Cardiac septum (tissue), 1 donor: ENCODE measurements at regions of chr1 and their contacts with region 1.

Region 1: DNA sequence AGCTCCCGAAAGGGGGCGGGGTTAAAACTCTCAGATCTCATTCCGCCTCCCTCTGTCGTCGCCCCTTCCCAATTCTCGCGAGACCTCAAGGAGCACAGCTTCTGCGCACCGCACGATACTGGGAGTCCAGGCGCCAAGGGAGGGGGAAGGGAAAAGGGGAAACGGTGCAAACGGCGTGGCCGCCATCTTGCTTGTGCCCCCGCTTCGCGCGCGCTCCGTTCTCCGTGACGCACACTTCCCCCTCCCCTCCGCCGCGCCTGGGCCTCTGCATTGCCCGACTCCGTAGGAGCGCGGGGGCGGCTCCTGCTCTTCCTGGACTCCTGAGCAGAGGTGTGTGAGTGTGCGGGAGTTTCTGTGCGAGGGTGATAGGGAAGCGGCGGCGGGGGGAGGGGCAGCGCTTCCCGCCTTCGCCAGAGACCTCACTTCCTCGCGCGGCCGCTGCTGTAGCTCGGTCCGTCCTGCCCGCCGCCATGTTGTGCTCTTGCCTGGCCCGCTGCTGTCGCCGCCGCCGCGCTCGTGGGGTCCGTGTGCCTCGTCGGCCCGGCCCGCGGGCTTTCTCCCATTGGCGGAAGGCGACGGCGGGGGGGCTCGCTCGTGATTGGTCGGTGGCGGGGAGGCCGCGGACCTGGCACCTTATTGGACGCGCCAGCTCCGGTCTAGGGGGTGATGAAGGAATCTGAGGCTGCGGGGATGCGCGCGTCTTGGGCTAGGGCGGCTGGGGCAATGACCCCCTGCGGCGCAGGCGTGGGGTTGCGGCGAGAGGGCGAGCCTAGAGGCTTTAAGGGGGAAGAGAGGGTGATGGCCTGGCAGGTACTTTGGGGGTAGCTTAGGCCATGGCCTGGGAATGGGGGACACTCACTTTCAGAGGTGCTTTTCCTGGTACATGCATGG is at the start of gene NFYC:
- DNase-seq: peak; percentile 98
- total RNA-seq, gene NFYC: 61.7 TPM

Region 2: DNA sequence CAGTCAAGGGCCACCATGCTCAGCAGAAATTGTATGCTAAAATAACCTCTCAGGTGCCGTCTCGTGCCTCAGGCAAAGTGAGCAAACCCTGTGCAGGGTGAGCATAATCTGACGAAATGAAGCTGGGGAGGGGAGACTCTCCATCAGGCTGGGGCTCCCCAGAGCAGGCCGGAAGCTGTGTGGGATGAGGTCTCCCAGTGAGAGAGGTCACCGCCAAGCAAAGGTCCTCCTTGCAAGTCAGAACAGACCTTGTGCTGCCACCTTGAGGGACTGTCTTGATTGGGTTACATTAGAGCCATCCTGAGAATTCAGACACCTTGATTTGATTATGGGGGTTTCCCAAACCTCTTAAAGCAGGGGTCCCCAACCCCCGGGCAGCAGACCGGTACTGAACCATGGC is 96.2 kb before region 1 on chr1:
- intact Hi-C with region 1: no loop called
- DNase-seq: no peak

Region 3: DNA sequence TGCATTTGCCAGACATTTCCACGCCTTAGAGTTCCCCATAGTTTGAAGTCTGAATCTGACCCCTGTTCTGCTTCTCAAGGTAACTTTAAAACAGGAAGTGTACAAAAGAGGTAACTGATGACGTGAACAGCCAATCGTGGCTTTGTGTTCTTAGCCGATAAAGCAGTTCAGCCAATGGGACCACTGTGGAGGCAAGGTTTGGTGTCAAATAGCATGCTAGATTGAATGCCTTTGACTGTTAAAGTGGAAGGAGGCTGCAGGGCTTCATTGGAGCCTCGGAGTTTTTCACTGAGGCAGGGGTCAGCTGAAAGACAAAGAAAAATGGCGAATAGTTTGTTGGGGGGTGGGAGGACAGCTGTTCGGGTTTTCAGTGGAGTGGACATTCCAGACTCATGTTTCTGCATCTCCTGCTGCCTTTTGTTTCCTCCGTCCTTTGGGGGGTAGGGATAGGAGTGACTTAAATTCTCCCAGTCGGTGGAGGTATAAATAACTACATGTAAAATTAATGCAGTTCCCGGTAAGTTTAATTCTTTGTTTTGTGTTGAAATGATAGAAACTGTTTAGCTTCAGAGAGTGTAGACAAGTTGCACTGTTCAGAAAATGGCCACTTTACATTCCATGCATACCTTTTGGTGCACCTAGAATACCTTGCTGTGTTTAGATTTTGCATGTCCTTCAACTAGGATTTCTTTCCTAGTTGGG is 17.5 kb after region 1 on chr1:
- intact Hi-C with region 1: loop called (anchors 1 kb)
- DNase-seq: peak; percentile 89

Region 4: DNA sequence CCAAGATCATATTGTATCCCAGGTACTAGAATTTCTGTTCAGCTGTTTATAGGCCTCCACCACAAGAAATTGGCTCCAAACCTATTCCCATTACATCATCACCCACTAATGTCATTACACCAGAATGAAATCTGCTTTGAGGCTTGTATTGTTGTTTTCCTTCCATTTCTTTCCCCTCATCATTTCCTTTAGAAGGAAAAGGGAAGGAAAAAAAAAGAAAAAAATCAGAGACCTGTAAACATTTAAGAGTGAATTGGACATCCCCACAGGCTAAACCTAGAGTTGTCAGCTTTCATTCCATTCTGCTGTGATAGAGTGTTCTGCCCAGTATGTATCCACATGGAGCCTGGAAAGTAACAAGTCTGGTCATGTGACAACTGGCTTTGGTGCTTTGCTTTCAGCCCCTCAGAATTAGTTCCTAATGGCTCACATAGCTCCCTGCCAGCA is 44.3 kb after region 1 on chr1:
- intact Hi-C with region 1: loop called (anchors 1 kb)
- DNase-seq: no peak